ENCODE measurements at regions of chr3 and their contacts with region 1.

Region 1: DNA sequence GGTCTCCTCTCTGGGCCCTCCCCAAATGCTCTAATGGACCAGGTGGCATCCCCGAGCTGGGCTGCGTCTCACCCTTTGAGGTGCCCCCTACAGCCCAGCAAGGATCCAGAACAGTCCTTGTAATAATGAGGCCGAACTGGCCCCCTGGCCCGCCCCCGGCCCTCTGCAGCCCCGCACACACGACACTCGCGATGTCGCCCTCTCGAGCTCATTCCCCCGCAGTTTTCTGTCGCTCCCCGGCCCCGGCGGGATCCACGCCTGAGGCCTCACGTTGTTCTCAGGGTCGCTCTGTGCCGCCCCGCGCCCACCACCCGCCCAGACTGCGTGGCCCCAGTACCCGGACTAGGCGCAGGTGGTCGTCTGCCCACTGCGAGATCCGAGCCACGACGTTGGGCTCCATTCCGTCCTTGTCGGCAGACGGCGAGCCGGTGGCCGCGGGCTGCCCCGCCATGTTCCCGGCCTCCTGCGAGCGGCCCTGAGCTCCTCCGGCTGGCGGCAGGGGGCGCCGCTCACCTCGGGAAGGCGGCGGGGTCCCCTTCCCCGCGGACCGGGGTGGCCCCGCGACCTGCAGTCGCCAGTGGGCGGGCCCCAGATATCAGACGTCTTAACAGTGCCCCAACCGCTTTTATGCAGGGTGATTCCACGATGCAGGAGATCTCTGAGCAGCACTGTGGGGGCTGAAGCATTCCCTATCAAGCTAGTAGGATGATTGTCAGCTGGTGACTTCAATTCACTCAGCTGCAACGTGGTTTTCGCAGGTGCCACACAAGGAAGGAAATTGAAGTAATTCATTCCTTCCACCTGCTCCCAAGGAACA is at the start of gene C3orf33:
- DNase-seq: peak; percentile 6
- H3K4me3 ChIP-seq: peak within 1 kb of the TSS; percentile 72
- H3K27ac ChIP-seq: peak within 1 kb of the TSS; percentile 47
- H3K27me3 ChIP-seq: no peaks in the 10 kb centered on the region
- CTCF ChIP-seq: peak; percentile 81
- polyA plus RNA-seq, gene C3orf33: 2.5 and 2.9 TPM in 2 replicates

Region 2: DNA sequence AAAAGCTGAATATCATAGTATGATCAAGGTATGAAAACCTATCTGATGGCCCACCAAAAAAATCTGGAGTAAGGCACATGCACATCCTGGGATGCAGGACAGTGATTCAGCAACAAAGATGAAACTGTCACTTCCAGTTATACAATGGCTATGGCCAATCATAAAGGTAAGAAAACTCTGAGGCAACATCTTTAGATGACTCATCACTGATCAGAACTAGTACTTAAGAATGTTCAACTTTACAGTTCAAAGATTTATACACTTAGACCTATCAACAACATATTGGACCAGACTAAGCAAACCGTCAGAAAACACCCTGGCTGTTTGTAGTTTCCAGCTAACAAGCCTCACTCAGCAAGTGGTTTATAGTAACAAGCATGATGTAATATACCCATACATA is 39.8 kb before region 1 on chr3:
- CTCF ChIA-PET with region 1: interaction called, 14 read pairs
- POLR2A ChIA-PET with region 1: no interaction called
- DNase-seq: peak; percentile 51
- H3K4me3 ChIP-seq: no peak overlapping the region
- H3K27ac ChIP-seq: no peak overlapping the region
- H3K27me3 ChIP-seq: no peaks in the 10 kb centered on the region
- CTCF ChIP-seq: no peak

Region 3: GRCh38 chr3:155791190-155791589 is 14.8 kb before region 1 on chr3:
- CTCF ChIA-PET with region 1: interaction called, 40 read pairs
- POLR2A ChIA-PET with region 1: no interaction called
- DNase-seq: no peak
- H3K4me3 ChIP-seq: no peak overlapping the region
- H3K27ac ChIP-seq: no peak overlapping the region
- H3K27me3 ChIP-seq: no peaks in the 10 kb centered on the region
- CTCF ChIP-seq: no peak

Region 4: DNA sequence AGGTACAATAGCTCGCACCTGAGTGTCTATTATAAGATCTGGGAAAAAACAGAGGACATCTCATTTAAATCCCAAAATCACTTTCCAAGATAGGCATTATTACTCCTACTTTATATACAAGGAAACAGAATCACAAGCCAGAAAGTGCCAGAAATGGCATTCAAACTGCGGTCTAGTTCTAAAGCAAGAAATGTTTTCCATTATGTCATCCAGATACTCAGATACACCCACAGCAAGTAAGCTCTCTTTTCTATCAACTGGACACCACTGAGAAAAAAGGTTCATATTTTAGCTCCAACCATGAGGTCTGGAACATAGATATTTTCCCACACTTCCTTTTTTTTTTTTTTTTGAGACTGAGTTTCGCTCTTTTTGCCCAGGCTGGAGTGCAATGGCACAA is 40.1 kb after region 1 on chr3:
- CTCF ChIA-PET with region 1: interaction called, 40 read pairs
- POLR2A ChIA-PET with region 1: no interaction called
- DNase-seq: no peak
- H3K4me3 ChIP-seq: no peak overlapping the region
- H3K27ac ChIP-seq: no peak overlapping the region
- H3K27me3 ChIP-seq: no peaks in the 10 kb centered on the region
- CTCF ChIP-seq: no peak

Region 5: DNA sequence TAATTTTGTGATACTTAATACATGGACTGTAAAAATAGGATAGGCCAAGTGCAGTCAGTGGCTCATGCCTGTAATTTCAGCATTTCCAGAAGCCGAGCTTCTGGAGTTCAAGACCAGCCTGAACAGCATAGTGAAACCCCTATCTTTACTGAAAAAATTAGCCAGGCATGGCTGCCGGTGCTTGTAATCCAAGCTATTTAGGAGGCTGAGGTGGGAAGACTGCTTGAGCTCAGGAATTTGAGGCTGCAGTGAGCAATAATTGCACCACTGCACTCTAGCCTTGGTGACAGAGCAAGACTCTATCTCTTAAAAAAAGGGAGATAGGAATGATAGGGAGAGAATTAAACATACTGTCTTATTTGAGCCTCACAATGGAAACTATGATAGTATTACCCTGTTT is 115.5 kb after region 1 on chr3:
- CTCF ChIA-PET with region 1: interaction called, 11 read pairs
- POLR2A ChIA-PET with region 1: no interaction called
- DNase-seq: no peak
- H3K4me3 ChIP-seq: no peak overlapping the region
- H3K27ac ChIP-seq: no peak overlapping the region
- H3K27me3 ChIP-seq: no peaks in the 10 kb centered on the region
- CTCF ChIP-seq: no peak

Region 6: GRCh38 chr3:156005736-156006135 is 199.7 kb after region 1 on chr3:
- CTCF ChIA-PET with region 1: interaction called, 15 read pairs
- POLR2A ChIA-PET with region 1: no interaction called
- DNase-seq: no peak
- H3K4me3 ChIP-seq: no peak overlapping the region
- H3K27ac ChIP-seq: no peak overlapping the region
- H3K27me3 ChIP-seq: no peaks in the 10 kb centered on the region
- CTCF ChIP-seq: no peak